ENCODE measurements at regions of chr19 and their contacts with region 1.

Region 1: DNA sequence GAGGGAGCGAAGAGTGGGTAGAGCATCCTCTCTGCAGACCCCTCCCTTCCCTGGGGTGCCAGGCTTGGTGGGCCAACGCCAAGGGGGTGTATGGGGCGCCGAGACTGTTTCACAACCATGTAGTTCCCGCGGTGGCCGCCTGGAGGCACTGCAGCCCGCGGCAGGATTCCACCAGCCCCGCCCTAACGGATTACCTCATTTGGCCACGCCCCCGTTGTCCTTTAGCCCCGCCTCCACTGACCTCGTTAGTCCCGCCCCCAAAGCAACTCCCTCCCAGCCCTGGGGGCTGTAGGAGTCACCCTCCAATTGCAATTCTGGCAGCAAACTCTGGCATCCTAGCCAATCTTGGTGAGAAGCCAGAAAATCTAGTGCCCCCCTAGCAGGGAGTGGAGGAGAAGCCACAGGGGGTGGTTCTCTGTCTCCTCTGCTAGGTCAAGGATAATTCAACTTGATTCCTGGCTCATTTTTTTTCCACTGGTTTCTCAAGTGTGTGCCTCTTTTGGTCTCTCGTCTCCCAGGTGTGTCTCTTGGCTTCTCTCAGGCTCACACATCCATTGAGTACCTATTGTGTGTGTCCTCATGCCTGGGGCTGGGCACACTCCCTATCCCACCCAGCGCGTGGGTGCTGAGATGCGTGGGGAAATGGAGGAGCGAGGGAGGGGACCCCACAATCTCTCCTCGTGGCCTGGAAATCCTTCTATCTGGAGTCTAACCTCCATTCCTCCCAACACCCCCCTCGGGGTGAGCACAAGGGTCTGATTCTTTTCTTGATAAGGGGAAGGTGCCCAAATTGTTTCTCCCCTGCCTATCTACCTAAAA is 2.0 kb downstream of the OLFM2 start:
- DNase-seq: no peak
- H3K4me3 ChIP-seq: no peak overlapping the region
- H3K27ac ChIP-seq: peak overlapping the region in 1 of 4 donors; percentile 5
- H3K4me1 ChIP-seq: peaks cover 17 to 40% (median 39%) of the 10 kb centered on the region in 4 donors
- H3K27me3 ChIP-seq: peaks cover 0 to 92% (median 22%) of the 10 kb centered on the region in 4 donors
- CTCF ChIP-seq: peak; percentile 60 to 79 (median 70)
- EP300 ChIP-seq: no peak
- POLR2A ChIP-seq: no peak

Region 2: DNA sequence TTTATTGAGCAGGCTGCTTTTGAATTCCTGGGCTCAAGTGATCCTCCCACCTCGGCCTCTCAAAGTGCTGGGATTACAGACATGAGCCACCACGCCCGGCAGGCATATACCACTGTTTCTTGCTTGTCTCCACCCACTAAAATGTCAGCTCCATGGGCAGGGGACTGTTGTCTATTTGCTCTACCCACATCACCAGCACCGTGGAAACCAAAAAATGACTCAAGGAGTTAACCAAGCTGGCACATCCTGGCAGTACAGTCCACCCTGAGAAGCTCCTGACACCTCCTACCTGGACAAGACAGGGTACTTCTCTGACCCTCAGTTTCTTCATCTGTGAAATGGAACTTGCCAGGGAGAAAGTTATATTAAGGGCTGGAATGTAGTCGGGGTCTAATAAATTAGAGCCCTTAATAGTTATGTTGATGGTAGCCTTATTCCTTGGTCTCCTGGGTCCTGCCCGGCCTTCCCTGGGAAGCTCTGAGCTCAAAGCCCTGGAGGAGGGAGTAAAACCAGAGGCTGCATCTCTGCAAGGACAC is 92.9 kb after region 1 on chr19:
- intact Hi-C with region 1: loop called (anchors 1 kb)
- DNase-seq: no peak
- H3K4me3 ChIP-seq: peak overlapping the region in 1 of 4 donors; percentile 11
- H3K27ac ChIP-seq: no peak overlapping the region
- H3K4me1 ChIP-seq: peaks cover 6 to 7% (median 7%) of the 10 kb centered on the region in 4 donors
- H3K27me3 ChIP-seq: peaks cover 0 to 34% (median 0%) of the 10 kb centered on the region in 4 donors
- CTCF ChIP-seq: no peak
- EP300 ChIP-seq: no peak
- POLR2A ChIP-seq: no peak

Region 3: DNA sequence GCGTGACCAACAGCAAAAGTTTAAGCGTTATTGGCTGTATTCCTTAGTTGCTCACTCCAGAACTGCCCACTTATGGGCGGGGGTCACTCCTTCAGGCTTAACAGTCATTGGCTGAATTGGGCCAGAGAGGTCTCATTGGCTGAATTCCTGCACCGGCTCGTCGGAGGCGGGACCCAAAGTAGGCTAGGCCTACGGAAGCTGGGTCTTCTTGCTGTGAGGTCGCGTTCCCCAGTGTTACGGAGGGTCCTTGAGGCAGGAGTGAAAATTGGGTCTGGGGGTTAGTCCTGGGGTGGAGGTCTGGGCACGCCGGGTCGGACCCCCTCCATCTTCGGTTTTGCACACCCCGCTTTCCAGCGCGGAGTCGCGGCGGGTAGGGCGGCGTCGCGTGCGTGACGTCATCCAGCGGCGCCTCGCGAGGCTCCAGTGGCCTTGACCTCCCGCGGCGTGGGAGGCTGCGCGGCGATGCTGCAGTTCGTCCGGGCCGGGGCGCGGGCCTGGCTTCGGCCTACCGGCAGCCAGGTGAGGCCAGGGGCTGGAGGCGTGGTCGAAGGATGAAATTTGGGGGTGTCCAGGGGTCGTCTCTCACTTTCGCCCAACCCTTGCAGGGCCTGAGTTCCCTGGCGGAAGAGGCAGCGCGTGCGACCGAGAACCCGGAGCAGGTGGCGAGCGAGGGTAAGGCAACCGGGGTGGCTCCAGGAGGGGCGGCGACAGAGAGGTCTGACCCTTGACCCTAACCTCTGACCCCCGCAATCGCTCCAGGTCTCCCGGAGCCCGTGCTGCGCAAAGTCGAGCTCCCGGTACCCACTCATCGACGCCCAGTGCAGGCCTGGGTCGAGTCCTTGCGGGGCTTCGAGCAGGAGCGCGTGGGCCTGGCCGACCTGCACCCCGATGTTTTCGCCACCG is 317.7 kb after region 1 on chr19 and contains the start of gene MRPL4:
- intact Hi-C with region 1: loop called (anchors 5 kb)
- DNase-seq: peak; percentile 99
- H3K4me3 ChIP-seq: peak within 1 kb of the TSS; percentile 67 to 93 (median 87)
- H3K27ac ChIP-seq: peak within 1 kb of the TSS; percentile 80 to 89 (median 84)
- H3K4me1 ChIP-seq: peaks cover 20 to 39% (median 36%) of the 10 kb centered on the region in 4 donors
- H3K27me3 ChIP-seq: no peaks in the 10 kb centered on the region
- CTCF ChIP-seq: no peak
- EP300 ChIP-seq: no peak
- POLR2A ChIP-seq: peak; percentile 53
- total RNA-seq, gene MRPL4: 39.9 to 78.0 (median 61.7) TPM

Measured in esophagus muscularis mucosa (tissue), 4 donors.